ENCODE measurements at regions of chr1 and their contacts with region 1.

Region 1: DNA sequence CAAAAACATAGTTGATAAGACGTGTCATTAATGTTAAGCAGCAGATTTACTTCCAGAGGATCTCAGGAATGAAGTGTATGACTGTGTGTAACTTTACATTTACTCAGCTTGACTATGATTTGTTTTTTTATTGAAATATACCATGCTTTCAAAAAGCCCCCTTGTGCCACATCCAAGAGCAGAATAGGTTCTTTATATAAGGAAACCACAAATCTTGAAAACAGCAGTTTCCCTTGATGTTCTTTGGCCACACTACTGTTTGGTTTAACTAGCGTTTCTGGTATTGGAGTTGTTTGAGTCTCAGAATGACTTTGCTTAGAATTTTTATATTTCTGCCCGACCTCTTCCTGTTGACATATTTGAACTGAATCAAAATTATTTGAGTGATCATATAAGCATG is 25.0 kb downstream of the LRRC8C start:
- DNase-seq: peak in 7 of 9 donors; percentile 46 to 80 (median 68)
- ATAC-seq: peak; percentile 86
- H3K4me3 ChIP-seq: peak overlapping the region; percentile 18
- H3K4me3 Mint-ChIP-seq: peak overlapping the region; percentile 36 to 78 (median 66)
- H3K27ac ChIP-seq: peak overlapping the region; percentile 50
- H3K27ac Mint-ChIP-seq: peak overlapping the region; percentile 79 to 91 (median 84)
- H3K4me1 ChIP-seq: peaks cover 65 to 94% of the 10 kb centered on the region in 2 donors
- H3K4me1 Mint-ChIP-seq: peaks cover 47 to 94% (median 89%) of the 10 kb centered on the region in 7 donors
- H3K27me3 ChIP-seq: no peaks in the 10 kb centered on the region
- H3K27me3 Mint-ChIP-seq: no peaks in the 10 kb centered on the region

Region 2: DNA sequence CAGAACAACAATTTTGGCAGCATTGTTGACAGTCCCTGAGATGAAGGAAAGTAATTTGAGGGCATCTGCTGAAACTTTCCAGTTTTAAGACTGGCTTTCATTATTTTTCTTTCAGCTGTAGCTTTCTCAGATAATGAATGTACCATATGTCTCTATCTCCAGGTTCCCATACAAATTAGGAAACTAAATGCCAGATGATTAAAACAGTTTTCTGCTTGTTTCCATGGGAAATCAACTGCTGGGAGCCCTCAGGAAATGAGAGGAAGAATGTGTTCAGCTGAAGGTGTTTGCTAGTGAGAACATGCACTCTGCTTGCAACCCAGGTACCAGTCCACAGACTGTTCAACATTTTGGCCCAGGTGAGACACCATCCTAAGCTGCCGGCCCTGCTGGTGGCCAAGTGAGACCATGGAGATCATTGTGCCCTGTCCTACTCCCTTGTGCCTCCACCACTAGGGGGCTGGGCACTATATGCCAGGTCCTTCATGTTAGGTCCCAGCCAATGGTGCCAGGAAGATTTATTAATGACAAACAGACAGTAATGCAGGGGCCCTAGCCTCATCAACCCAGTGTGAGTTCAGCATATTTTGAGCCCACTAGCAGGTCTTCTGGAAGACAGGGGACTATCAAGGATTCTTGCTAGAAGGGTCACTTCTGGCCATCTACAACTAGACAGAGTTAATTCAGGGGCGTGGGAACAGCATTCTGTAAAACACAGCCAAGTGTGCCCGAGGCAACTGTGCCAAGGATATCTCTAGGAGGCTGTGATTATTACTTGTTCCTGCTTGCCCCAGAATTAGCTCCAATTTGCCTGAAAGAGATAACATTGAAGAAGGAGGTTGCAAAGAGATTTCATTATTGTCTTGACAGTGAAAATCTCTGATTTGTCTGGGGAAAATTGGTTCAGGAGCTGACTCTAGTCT is 41.9 kb before region 1 on chr1:
- CTCF ChIA-PET with region 1: interaction called, 3 read pairs
- POLR2A ChIA-PET with region 1: interaction called, 3 read pairs
- intact Hi-C with region 1: loop called in 1 of 2 experiments (anchors 1 kb)
- DNase-seq: no peak
- ATAC-seq: peak; percentile 54
- H3K4me3 ChIP-seq: no peak overlapping the region
- H3K4me3 Mint-ChIP-seq: peak overlapping the region in 2 of 10 donors; percentile 23 to 24
- H3K27ac ChIP-seq: no peak overlapping the region
- H3K27ac Mint-ChIP-seq: peak overlapping the region in 8 of 9 donors; percentile 15 to 86 (median 74)
- H3K4me1 ChIP-seq: peaks cover 30 to 42% of the 10 kb centered on the region in 2 donors
- H3K4me1 Mint-ChIP-seq: peaks cover 38 to 95% (median 84%) of the 10 kb centered on the region in 7 donors
- H3K27me3 ChIP-seq: no peaks in the 10 kb centered on the region
- H3K27me3 Mint-ChIP-seq: no peaks in the 10 kb centered on the region

Region 3: GRCh38 chr1:89670163-89670562 is 12.3 kb after region 1 on chr1:
- CTCF ChIA-PET with region 1: interaction called, 5 read pairs
- POLR2A ChIA-PET with region 1: interaction called, 11 read pairs
- intact Hi-C with region 1: loop called in 1 of 2 experiments (anchors 2 kb)
- DNase-seq: peak in 5 of 9 donors; percentile 10 to 23 (median 20)
- ATAC-seq: peak; percentile 88
- H3K4me3 ChIP-seq: no peak overlapping the region
- H3K4me3 Mint-ChIP-seq: peak overlapping the region in 9 of 10 donors; percentile 0 to 68 (median 22)
- H3K27ac ChIP-seq: no peak overlapping the region
- H3K27ac Mint-ChIP-seq: peak overlapping the region in 6 of 9 donors; percentile 4 to 87 (median 36)
- H3K4me1 ChIP-seq: peaks cover 48 to 50% of the 10 kb centered on the region in 2 donors
- H3K4me1 Mint-ChIP-seq: peaks cover 64 to 100% (median 98%) of the 10 kb centered on the region in 7 donors
- H3K27me3 ChIP-seq: no peaks in the 10 kb centered on the region
- H3K27me3 Mint-ChIP-seq: no peaks in the 10 kb centered on the region

Region 4: GRCh38 chr1:89698624-89699023 is 40.7 kb after region 1 on chr1:
- CTCF ChIA-PET with region 1: no interaction called
- POLR2A ChIA-PET with region 1: interaction called, 3 read pairs
- intact Hi-C with region 1: loop called (anchors 2 to 5 kb)
- DNase-seq: peak in 2 of 9 donors; percentile 21 to 28
- ATAC-seq: peak; percentile 59
- H3K4me3 ChIP-seq: peak overlapping the region; percentile 15
- H3K4me3 Mint-ChIP-seq: peak overlapping the region in 9 of 10 donors; percentile 52 to 82 (median 65)
- H3K27ac ChIP-seq: peak overlapping the region; percentile 34
- H3K27ac Mint-ChIP-seq: peak overlapping the region; percentile 73 to 89 (median 87)
- H3K4me1 ChIP-seq: peaks cover 45 to 67% of the 10 kb centered on the region in 2 donors
- H3K4me1 Mint-ChIP-seq: peaks cover 50 to 93% (median 82%) of the 10 kb centered on the region in 7 donors
- H3K27me3 ChIP-seq: no peaks in the 10 kb centered on the region
- H3K27me3 Mint-ChIP-seq: no peaks in the 10 kb centered on the region

Region 5: DNA sequence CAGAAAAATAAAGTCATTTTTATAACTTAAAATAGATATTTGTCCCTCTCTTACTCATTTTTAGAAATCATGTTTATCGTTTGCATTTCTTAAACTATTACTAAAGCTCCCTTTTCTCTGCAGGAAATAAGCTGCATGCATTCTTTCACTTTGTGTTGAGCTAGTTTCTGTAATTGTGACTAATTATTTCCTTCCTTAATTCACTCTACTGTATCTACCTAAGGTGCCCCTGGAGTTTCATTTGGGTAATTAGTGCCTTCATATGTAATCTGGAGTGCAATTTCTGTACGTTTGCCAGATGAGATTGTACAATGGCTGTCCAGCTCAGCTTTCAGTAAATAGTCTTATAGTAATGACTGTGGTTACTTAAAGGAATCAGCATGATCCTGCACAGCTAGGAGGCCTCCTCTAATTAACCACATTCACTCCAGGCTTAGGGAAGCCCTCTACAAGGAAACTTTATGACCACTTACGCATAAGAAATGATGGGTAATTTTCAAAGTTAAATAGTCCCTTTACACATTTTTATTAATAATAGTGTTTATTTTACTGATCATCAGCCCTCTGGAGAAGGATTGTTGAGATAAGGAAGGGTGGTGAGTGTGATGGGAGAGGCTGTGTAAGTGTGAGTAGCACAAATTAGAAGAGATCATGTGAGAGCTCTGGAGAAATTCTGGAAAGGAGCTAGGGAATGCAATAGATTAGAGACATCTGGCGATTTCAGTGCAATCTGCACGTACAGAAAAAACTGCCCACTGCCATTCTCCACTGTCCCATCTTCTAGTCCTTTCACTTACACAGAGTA is 61.8 kb after region 1 on chr1:
- CTCF ChIA-PET with region 1: no interaction called
- POLR2A ChIA-PET with region 1: interaction called, 3 read pairs
- intact Hi-C with region 1: loop called (anchors 1 to 2 kb)
- DNase-seq: no peak
- ATAC-seq: peak; percentile 77
- H3K4me3 ChIP-seq: no peak overlapping the region
- H3K4me3 Mint-ChIP-seq: peak overlapping the region in 9 of 10 donors; percentile 1 to 82 (median 48)
- H3K27ac ChIP-seq: peak overlapping the region; percentile 10
- H3K27ac Mint-ChIP-seq: peak overlapping the region; percentile 1 to 97 (median 66)
- H3K4me1 ChIP-seq: peaks cover 27 to 57% of the 10 kb centered on the region in 2 donors
- H3K4me1 Mint-ChIP-seq: peaks cover 34 to 82% (median 75%) of the 10 kb centered on the region in 7 donors
- H3K27me3 ChIP-seq: no peaks in the 10 kb centered on the region
- H3K27me3 Mint-ChIP-seq: no peaks in the 10 kb centered on the region

Measured in naive thymus-derived CD4-positive, alpha-beta T cell (primary cell).